A549 (cell line): ENCODE measurements at regions of chr1 and their contacts with region 1.

Region 1: DNA sequence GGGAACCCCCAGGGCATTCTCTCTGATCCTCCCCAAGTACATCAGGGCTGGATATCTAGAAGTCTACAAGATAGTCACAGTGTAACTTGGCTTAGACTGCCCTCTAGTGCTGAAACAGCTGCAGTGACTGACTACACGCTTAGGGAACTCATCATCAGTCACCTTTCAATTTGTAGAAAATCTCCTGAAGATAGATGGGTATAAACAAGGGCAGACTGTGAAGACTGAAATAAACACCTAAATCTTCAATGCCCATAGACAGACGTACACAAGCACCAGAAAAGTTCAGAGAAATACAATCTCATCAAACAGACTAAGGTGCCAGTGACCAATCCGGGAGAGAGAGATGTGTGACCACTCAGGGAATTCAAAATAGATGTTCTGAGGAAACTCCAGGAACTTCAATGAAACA is 46.6 kb downstream of the PACC1 start:
- DNase-seq: peak; percentile 54 to 74
- ATAC-seq: peak; percentile 97 to 98
- H3K4me3 ChIP-seq: no peak overlapping the region
- H3K27ac ChIP-seq: no peak overlapping the region
- H3K4me1 ChIP-seq: no peaks in the 10 kb centered on the region
- CTCF ChIP-seq: peak; percentile 76
- EP300 ChIP-seq: no peak
- POLR2A ChIP-seq: no peak
- RAD21 ChIP-seq: peak; percentile 78 to 83

Region 2: DNA sequence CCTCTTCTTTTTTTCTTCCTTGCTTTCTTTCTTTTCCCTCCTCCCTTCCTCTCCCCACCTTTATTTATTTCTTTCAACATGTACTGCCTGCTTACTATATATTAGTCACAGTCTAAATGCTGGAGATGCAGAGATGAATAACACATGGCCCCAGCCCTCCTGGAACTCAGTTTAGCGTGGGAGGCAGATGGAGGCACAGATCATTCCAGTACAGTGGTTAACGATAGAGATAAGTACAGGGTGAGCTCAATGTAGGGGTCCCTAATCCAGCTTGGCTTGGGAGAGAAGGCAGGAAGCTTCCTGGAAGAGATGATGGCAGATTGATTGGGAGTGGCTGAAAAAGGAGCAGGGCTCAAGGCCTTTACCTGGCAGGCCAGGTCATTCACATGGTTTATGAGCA is 138.4 kb before region 1 on chr1:
- CTCF ChIA-PET with region 1: no interaction called
- POLR2A ChIA-PET with region 1: no interaction called
- DNase-seq: no peak
- ATAC-seq: no peak
- H3K4me3 ChIP-seq: no peak overlapping the region
- H3K27ac ChIP-seq: no peak overlapping the region
- H3K4me1 ChIP-seq: peaks cover 19% of the 10 kb centered on the region
- CTCF ChIP-seq: no peak
- EP300 ChIP-seq: no peak
- POLR2A ChIP-seq: no peak
- RAD21 ChIP-seq: no peak

Region 3: GRCh38 chr1:212284744-212285684 is 83.1 kb before region 1 on chr1 and contains the start of gene PPP2R5A:
- CTCF ChIA-PET with region 1: interaction called, 11 read pairs
- POLR2A ChIA-PET with region 1: no interaction called
- DNase-seq: peak; percentile 98 to 100
- ATAC-seq: peak; percentile 89 to 96
- H3K4me3 ChIP-seq: peak within 1 kb of the TSS; percentile 82
- H3K27ac ChIP-seq: peak within 1 kb of the TSS; percentile 93 to 96
- H3K4me1 ChIP-seq: peaks cover 32% of the 10 kb centered on the region
- CTCF ChIP-seq: peak; percentile 46
- EP300 ChIP-seq: no peak; a peak in 1 of 5 replicates
- POLR2A ChIP-seq: peak; percentile 83
- RAD21 ChIP-seq: no peak; a peak in 1 of 5 replicates
- polyA plus RNA-seq, gene PPP2R5A: 33.6 and 37.6 TPM in 2 replicates

Region 4: GRCh38 chr1:212291505-212292134 is 76.5 kb before region 1 on chr1:
- CTCF ChIA-PET with region 1: interaction called, 11 read pairs
- POLR2A ChIA-PET with region 1: no interaction called
- DNase-seq: peak; percentile 44 to 66
- ATAC-seq: peak; percentile 81 to 85
- H3K4me3 ChIP-seq: no peak overlapping the region
- H3K27ac ChIP-seq: 0 out of 6 replicates have a peak overlapping the region, but pooled peaks of 1 of the 2 experiments have one; percentile 32
- H3K4me1 ChIP-seq: peaks cover 45% of the 10 kb centered on the region
- CTCF ChIP-seq: peak; percentile 69
- EP300 ChIP-seq: no peak
- POLR2A ChIP-seq: no peak
- RAD21 ChIP-seq: peak; percentile 77 to 82